A549 (cell line): ENCODE measurements at regions of chr5 and their contacts with region 1.

Region 1: DNA sequence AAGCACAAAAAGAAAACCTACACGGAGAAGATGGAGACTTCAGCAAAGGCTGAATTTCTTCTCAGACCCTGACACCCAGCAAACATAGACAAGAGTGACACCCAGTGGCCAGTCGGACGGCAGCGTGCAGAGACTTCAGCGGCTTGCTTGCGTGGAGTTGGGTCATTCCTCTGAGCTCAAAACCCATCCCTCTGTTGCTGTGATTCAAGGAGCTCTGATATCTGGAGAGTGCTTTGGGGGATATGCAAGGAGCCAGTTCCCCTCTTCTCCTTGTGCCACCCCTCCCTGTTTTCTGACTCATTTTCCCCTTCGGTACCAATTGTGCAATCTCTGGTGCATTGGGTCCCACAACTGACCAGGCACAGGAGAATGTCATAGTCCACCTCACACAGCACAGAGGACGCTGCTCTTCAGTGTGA is 27.5 kb downstream of the SH3TC2 start:
- DNase-seq: peak; percentile 57 to 79
- ATAC-seq: peak; percentile 95 to 99
- H3K4me3 ChIP-seq: no peak overlapping the region
- H3K27ac ChIP-seq: no peak overlapping the region
- H3K4me1 ChIP-seq: peaks cover 7% of the 10 kb centered on the region; the same call in 1 of the 3 replicates
- CTCF ChIP-seq: peak; percentile 93
- EP300 ChIP-seq: no peak
- POLR2A ChIP-seq: no peak
- RAD21 ChIP-seq: peak; percentile 92 to 95

Region 2: DNA sequence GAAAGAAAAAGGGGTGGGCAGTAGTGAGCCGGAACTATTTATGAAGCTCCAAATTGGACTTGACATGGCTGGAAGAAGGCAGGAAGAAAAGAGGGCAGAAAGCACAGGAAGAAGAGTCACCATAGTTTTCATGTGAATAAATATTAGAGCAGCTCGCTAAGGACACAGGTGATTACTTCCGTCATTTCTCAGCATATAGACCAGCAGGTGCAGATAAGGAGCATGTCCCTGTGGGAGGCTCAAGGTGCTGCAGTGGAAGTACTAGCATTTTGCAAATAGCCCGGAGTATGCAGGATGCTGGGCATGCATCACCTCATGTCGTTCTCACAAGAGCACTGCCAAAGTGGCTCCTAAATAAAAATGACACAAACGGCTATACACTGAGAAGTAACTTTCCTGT is 309.7 kb before region 1 on chr5:
- CTCF ChIA-PET with region 1: interaction called, 432 read pairs
- POLR2A ChIA-PET with region 1: no interaction called
- DNase-seq: no peak
- ATAC-seq: no peak
- H3K4me3 ChIP-seq: no peak overlapping the region
- H3K27ac ChIP-seq: no peak overlapping the region
- H3K4me1 ChIP-seq: peaks cover 5% of the 10 kb centered on the region; the same call in 1 of the 3 replicates
- CTCF ChIP-seq: no peak
- EP300 ChIP-seq: no peak
- POLR2A ChIP-seq: no peak
- RAD21 ChIP-seq: no peak

Region 3: DNA sequence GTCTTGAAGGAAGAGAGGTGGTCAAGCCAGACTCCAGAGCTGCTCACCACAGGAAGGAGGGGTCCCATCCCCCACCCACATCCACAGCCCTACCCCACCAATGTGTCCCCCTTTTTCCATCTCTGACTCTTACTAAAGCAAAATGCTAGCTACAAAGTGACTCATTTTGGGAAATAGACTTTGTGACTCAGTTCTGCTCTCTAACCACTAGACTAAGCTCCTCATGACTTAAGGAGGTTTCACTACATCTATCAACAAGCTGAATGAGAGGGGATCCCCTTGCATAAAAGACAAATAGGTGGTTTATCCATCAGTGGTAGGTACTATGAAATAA is 244.1 kb before region 1 on chr5:
- CTCF ChIA-PET with region 1: interaction called, 13 read pairs
- POLR2A ChIA-PET with region 1: no interaction called
- DNase-seq: no peak
- ATAC-seq: no peak
- H3K4me3 ChIP-seq: no peak overlapping the region
- H3K27ac ChIP-seq: no peak overlapping the region
- H3K4me1 ChIP-seq: no peaks in the 10 kb centered on the region
- CTCF ChIP-seq: no peak
- EP300 ChIP-seq: no peak
- POLR2A ChIP-seq: no peak
- RAD21 ChIP-seq: no peak

Region 4: DNA sequence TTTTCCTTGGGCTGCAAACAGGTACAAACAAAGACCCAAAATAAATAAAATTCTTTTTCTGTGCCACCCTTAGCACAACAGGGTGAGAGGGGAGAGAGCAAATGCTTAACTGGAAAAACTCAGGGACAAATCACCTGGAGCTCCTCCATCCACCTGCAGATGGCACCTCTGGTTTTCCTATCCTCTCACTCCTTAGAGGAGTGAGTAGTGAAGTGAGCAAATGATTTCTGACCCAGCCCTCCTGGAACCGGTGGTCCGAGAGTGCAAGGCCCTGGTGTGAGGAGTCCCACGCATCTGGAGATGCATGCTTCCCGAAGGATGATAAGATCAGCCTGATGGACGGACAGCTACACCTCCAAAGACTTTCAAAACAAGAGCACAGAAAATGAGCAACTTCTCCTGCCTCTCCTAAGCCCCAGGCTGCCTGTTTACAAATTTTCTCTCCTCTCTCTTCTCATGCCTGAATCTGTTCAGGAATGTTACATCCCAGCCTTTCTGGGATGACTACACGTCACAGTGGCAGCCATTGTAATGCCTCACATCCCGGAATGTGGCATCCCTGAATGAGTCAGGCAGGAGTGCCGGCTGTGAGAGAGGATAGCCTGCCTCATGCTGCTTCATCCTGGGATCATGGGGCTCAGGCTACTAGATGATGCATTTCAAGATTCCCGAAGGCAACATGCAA is 122.5 kb before region 1 on chr5:
- CTCF ChIA-PET with region 1: interaction called, 46 read pairs
- POLR2A ChIA-PET with region 1: no interaction called
- DNase-seq: peak; percentile 82
- ATAC-seq: peak; percentile 91 to 96
- H3K4me3 ChIP-seq: no peak overlapping the region
- H3K27ac ChIP-seq: peak overlapping the region; percentile 43 to 59; a peak in 5 of 6 replicates
- H3K4me1 ChIP-seq: peaks cover 37% of the 10 kb centered on the region
- CTCF ChIP-seq: peak; percentile 52
- EP300 ChIP-seq: peak in 1 of 2 experiments; percentile 29; a peak in 1 of 5 replicates
- POLR2A ChIP-seq: no peak
- RAD21 ChIP-seq: peak; percentile 65 to 66

Region 5: DNA sequence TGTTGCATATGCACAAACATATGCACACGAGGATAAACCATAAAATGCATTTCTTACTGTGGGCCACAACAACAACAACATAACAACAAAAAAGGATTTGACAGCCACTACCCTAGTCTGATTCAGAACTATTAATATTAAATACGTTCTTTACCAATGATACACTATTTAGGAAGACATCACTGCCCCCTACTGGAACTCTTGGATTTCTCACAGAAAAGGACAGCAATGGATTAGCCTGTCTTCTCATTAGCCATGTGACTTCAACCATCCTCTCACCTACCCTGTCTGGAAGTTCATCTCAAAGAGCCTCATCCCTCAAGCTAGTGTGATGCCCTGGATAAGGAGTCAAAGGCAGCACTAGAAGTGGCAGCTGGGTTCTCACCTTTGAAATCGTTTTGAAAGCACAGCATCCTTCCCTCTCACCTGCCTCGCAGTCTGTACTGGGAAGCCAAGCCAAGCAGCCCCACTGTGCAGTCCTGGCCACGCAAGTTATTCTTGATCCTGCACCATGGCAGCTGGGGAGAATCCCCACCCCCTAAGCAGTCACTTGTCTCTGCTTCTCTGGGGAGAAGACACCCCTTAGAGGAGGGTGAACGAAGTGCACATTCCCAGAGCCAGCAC is 37.1 kb before region 1 on chr5:
- CTCF ChIA-PET with region 1: interaction called, 66 read pairs
- POLR2A ChIA-PET with region 1: no interaction called
- DNase-seq: peak; percentile 35 to 65
- ATAC-seq: peak; percentile 57 to 68; a peak in 5 of 6 replicates
- H3K4me3 ChIP-seq: no peak overlapping the region
- H3K27ac ChIP-seq: no peak overlapping the region
- H3K4me1 ChIP-seq: peaks cover 20% of the 10 kb centered on the region
- CTCF ChIP-seq: peak; percentile 78
- EP300 ChIP-seq: no peak
- POLR2A ChIP-seq: no peak
- RAD21 ChIP-seq: peak; percentile 75 to 76

Region 6: GRCh38 chr5:149024477-149024876 is 10.9 kb before region 1 on chr5:
- CTCF ChIA-PET with region 1: interaction called, 26 read pairs
- POLR2A ChIA-PET with region 1: no interaction called
- DNase-seq: no peak
- ATAC-seq: no peak; a peak in 1 of 6 replicates
- H3K4me3 ChIP-seq: no peak overlapping the region
- H3K27ac ChIP-seq: no peak overlapping the region
- H3K4me1 ChIP-seq: no peaks in the 10 kb centered on the region
- CTCF ChIP-seq: no peak
- EP300 ChIP-seq: no peak
- POLR2A ChIP-seq: no peak
- RAD21 ChIP-seq: no peak

Region 7: GRCh38 chr5:149979896-149980295 is 944.5 kb after region 1 on chr5:
- CTCF ChIA-PET with region 1: no interaction called
- POLR2A ChIA-PET with region 1: no interaction called
- DNase-seq: no peak
- ATAC-seq: no peak
- H3K4me3 ChIP-seq: no peak overlapping the region
- H3K27ac ChIP-seq: no peak overlapping the region
- H3K4me1 ChIP-seq: peaks cover 10% of the 10 kb centered on the region; the same call in 1 of the 3 replicates
- CTCF ChIP-seq: no peak
- EP300 ChIP-seq: no peak
- POLR2A ChIP-seq: no peak
- RAD21 ChIP-seq: no peak